Panc1 (cell line): ENCODE measurements at regions of chr4 and their contacts with region 1.

Region 1: DNA sequence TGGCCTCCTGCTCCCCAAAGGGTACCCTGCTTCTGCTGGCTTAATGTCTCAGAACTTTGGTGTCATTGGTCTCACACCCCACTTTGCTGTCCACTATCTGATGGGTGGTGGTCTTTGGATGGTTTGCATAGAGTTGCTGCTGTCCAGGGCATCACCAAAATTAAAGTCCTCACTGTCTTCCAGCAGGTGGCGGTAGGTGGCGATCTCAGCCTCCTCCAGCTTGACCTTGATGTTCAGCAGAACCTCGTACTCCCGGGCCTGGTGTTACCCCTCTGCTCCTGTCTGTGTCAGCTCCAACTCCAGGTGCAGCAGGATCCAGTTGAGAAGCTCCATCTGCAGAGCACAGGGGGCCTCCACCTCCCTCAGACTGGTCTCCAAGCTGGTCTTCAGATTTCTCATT is 1169.5 kb upstream of the PABPC4L start:
- DNase-seq: no peak
- ATAC-seq: no peak
- H3K4me3 ChIP-seq: no peak overlapping the region
- H3K27ac ChIP-seq: no peak overlapping the region
- H3K4me1 ChIP-seq: no peaks in the 10 kb centered on the region
- H3K27me3 ChIP-seq: no peaks in the 10 kb centered on the region
- CTCF ChIP-seq: peak; percentile 8; the same call in 1 of the 2 replicates

Region 2: GRCh38 chr4:135192751-135193535 is 178.2 kb before region 1 on chr4:
- CTCF ChIA-PET with region 1: no interaction called
- POLR2A ChIA-PET with region 1: no interaction called
- in situ Hi-C with region 1: no loop called
- intact Hi-C with region 1: no loop called
- DNase-seq: no peak
- ATAC-seq: no peak
- H3K4me3 ChIP-seq: no peak overlapping the region
- H3K27ac ChIP-seq: no peak overlapping the region
- H3K4me1 ChIP-seq: no peaks in the 10 kb centered on the region
- H3K27me3 ChIP-seq: no peaks in the 10 kb centered on the region
- CTCF ChIP-seq: no peak

Region 3: DNA sequence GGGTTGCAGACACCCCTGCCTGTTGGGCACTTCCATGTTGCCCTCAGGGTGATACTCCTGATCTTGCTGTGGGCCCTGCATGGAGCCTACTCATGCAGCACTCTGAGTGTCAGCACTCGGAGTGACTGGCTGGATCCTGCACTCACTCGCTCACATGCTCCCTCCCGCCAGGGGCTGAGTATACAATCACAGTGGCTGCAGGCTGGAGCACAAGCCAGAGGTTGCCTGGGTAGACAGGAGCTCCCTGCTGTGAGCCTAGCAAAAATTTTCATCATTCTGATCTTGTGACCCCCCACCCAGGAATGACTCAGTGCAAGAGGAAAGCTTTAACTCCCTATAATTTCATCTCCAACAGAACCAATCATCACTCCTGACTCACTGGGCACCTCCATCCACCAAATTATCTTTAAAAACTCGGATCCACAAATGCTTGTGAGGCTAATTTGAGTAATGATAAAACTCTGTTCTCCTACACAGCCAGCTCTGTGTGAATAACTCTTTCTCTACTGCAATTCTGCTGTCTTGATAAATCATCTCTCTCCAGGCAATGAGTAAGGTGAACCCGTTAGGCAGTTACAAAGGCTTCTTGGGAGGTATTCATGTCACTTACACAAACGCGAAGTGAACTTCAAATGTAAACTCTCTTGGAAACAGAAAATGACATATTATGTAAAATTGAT is 11.3 kb after region 1 on chr4:
- CTCF ChIA-PET with region 1: no interaction called
- POLR2A ChIA-PET with region 1: interaction called, 22 read pairs
- in situ Hi-C with region 1: no loop called
- intact Hi-C with region 1: no loop called
- DNase-seq: no peak
- ATAC-seq: no peak
- H3K4me3 ChIP-seq: no peak overlapping the region
- H3K27ac ChIP-seq: no peak overlapping the region
- H3K4me1 ChIP-seq: no peaks in the 10 kb centered on the region
- H3K27me3 ChIP-seq: no peaks in the 10 kb centered on the region
- CTCF ChIP-seq: no peak